ENCODE measurements at regions of chr9 and their contacts with region 1.

Region 1: GRCh38 chr9:107690021-107690420 is 200.5 kb upstream of the KLF4 start:
- DNase-seq: no peak
- ATAC-seq: no peak
- H3K4me3 ChIP-seq: no peak overlapping the region
- H3K27ac ChIP-seq: no peak overlapping the region
- H3K4me1 ChIP-seq: no peaks in the 10 kb centered on the region
- CTCF ChIP-seq: no peak
- EP300 ChIP-seq: no peak
- POLR2A ChIP-seq: no peak
- RAD21 ChIP-seq: no peak

Region 2: DNA sequence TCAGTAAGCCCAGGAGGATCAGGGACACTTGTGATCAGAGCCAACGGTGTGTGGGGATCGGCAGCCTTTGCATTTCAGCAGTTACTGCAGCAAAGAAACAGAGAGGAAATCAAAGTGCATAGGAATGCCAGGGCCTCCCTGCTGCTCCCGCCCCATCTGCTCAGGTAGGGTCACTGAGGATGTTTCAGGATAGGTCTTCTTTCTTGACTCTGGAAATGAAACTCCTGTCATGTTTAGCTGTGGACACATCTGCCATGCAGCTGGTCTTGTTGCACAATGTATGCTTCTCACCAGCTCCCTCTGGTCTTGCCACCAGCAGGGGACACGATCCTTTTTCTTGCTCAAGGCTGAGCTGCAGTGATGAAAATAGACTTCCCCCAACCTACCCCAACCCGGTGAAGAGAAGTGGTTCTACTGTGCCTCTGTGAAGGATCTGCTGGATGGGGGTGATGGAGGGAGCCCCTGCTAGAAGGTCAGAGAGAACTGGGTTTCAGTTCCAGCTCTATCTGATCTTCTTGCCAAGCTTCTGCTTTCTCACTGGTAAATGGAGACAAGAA is 15.2 kb before region 1 on chr9:
- CTCF ChIA-PET with region 1: interaction called, 11 read pairs
- POLR2A ChIA-PET with region 1: no interaction called
- DNase-seq: no peak
- ATAC-seq: no peak
- H3K4me3 ChIP-seq: no peak overlapping the region
- H3K27ac ChIP-seq: no peak overlapping the region
- H3K4me1 ChIP-seq: no peaks in the 10 kb centered on the region
- CTCF ChIP-seq: no peak
- EP300 ChIP-seq: no peak
- POLR2A ChIP-seq: no peak
- RAD21 ChIP-seq: no peak